ENCODE measurements at regions of chr7 and their contacts with region 1.

Region 1: DNA sequence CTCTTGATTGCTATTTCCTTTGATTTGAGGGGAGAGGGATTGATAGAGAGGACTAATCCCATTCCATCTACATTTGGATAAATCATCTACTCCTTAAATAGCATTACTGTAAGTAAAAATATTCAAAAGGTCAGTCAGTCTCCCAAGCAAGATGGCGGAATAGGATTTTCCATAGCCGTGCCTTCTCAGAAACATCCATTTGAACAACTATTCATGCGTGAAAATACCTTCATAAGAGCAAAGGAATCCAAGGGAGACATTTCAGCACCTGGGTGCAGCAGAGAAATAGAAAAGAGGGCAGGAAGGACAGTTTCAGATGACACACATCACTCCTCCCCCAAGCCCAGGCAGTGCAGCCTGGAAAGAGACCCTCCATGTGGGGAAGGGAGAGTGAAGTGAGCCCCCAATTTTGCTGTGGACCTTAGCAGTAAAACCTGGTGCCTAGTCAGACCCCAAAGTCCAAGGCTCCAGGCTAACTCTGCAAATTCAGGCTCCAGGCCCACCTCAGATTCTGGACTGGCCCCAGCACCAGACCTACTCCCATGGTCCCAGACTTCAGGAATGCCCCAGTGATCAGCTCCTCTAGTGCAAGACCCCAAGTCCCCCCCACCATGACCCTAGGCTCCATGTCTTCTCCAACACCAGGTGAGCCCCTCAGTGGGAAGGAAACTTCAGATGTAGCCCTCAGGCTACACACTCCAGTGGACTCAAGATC is 104.3 kb upstream of the LANCL2 start:
- DNase-seq: no peak
- H3K4me3 ChIP-seq: no peak overlapping the region
- H3K27ac ChIP-seq: no peak overlapping the region
- H3K4me1 ChIP-seq: no peaks in the 10 kb centered on the region
- H3K27me3 ChIP-seq: peaks cover 15% of the 10 kb centered on the region

Region 2: GRCh38 chr7:54788664-54789063 is 472.2 kb before region 1 on chr7:
- in situ Hi-C with region 1: loop called (anchors 5 kb)
- DNase-seq: peak; percentile 91
- H3K4me3 ChIP-seq: no peak overlapping the region
- H3K27ac ChIP-seq: no peak overlapping the region
- H3K4me1 ChIP-seq: peaks cover 3% of the 10 kb centered on the region; the same call in 1 of the 2 replicates
- H3K27me3 ChIP-seq: no peaks in the 10 kb centered on the region

Measured in GM23248 (cell line).